Activated naive CD4-positive, alpha-beta T cell treated with anti-CD3 and anti-CD28 coated beads, Interleukin-2, amount 10 ng/mL, durations not matched to agents 7 days and 5 days (primary cell): ENCODE measurements at regions of chr5 and their contacts with region 1.

Region 1: DNA sequence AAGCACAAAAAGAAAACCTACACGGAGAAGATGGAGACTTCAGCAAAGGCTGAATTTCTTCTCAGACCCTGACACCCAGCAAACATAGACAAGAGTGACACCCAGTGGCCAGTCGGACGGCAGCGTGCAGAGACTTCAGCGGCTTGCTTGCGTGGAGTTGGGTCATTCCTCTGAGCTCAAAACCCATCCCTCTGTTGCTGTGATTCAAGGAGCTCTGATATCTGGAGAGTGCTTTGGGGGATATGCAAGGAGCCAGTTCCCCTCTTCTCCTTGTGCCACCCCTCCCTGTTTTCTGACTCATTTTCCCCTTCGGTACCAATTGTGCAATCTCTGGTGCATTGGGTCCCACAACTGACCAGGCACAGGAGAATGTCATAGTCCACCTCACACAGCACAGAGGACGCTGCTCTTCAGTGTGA is 27.5 kb downstream of the SH3TC2 start:
- DNase-seq: peak; percentile 77
- H3K4me3 Mint-ChIP-seq: no peak overlapping the region
- H3K27ac Mint-ChIP-seq: no peak overlapping the region
- H3K4me1 Mint-ChIP-seq: peaks cover 34% of the 10 kb centered on the region
- H3K27me3 Mint-ChIP-seq: peaks cover 11% of the 10 kb centered on the region

Region 2: DNA sequence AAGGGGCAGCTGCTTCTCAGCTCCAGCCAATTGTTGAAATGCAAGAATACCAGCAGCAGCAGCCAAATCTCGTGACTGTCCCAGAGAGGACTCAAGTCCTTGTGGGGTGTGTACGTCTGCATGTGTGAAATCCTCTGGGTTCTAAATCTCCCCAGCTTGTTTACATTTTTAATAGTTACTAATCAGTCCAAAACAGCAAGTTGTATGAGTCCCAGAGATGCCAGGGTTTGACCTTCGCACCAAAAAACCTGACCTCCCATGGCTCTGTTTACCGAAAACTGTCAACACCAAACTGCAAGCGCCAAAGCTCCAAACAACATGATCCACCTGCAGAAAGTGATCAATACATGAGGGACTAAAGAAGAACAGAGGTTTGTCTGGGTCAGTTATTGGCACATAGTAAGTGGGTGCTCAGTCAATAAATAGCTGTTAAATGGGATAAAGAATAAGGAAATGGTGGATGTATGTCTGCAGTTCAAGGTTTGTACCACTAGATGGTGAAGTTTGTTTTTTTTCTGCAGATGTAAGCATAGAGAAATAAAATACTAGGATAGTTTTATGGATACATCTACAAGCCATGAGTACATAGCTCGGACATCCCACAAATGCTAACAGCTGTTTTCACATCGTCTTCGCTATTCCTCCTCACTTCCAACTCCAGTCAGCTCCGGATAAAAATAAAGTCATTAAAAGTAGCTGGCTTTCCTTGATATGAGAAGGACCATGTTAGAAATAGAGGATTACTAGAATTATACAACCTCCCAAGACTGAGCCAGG is 294.2 kb before region 1 on chr5:
- CTCF ChIA-PET with region 1: interaction called, 179 read pairs
- DNase-seq: no peak
- H3K4me3 Mint-ChIP-seq: no peak overlapping the region
- H3K27ac Mint-ChIP-seq: no peak overlapping the region
- H3K4me1 Mint-ChIP-seq: peaks cover 2% of the 10 kb centered on the region
- H3K27me3 Mint-ChIP-seq: peaks cover 15% of the 10 kb centered on the region

Region 3: DNA sequence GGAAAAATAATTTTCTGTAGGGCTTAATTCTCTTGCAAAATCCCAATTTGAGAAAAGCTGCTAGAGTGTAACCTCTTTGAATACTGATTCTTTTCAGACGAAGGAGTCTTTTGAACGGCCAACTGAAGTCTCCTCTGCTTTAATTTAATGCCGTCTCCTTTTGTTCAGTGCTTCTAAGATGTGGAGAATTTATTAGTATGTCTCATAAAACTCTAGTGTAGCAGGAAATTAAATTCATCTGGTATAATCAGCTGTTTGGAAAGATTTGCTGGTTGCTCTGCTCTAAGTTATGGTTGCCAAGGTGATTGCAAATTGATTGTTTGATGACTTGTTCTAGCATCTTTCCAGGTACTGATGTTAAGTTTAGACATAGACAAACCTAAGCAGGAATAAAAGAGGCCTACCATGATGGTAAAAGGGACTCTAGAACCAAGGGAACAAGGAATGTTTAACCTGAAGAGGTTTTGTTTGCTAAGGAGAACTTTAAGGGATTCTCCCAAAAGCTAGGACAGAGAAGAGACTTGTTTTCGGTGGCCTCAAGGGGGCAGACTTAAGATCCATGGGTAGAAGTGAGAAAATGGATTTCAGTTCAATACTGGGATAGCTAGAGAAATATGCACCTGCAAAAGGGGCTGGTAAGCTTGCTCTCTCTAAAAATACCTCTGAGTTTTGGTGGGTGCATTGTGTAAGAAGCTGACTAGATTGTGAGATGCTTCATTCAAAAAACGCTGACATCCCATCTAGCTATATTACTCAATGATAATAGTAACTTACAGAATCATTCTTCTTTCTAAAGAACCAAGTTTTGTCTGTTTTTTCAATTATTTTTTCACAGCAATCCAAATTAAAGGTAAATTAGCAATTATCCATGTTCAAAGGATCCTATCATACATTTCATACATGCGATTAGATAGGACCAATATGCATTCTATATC is 214.7 kb before region 1 on chr5:
- CTCF ChIA-PET with region 1: interaction called, 20 read pairs
- DNase-seq: peak; percentile 42
- H3K4me3 Mint-ChIP-seq: no peak overlapping the region
- H3K27ac Mint-ChIP-seq: no peak overlapping the region
- H3K4me1 Mint-ChIP-seq: peaks cover 10% of the 10 kb centered on the region
- H3K27me3 Mint-ChIP-seq: peaks cover 39% of the 10 kb centered on the region

Region 4: DNA sequence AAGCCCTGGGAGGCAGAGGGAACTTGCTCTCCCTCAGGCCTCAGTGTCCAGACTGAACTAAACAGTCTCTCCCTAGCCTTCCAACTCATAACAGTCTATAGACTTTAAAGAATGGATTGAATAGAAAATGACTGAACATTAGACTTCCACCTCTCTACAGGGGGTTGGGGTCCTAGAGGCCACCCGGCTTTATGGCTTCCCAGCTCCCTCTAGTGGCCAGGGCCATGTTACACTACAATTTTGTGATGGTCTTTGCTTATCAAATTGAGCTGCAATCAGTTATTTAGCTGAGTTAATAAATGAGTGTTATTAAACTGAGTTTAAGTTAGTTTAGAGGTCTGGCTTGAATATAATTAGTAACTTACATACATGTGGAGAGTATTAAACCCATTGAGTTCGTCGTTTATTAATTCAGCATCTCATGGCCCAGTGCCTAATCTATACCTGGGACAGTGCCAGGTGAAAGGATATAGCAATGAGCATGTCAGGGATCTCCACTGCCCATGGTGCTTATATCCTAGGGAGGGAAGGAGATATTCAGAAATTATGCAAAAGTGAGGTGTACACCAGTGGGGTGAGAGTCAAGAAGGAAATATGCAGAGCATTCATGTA is 77.7 kb before region 1 on chr5:
- CTCF ChIA-PET with region 1: interaction called, 33 read pairs
- DNase-seq: peak; percentile 57
- H3K4me3 Mint-ChIP-seq: no peak overlapping the region
- H3K27ac Mint-ChIP-seq: no peak overlapping the region
- H3K4me1 Mint-ChIP-seq: no peaks in the 10 kb centered on the region
- H3K27me3 Mint-ChIP-seq: peaks cover 8% of the 10 kb centered on the region

Region 5: GRCh38 chr5:149015561-149015960 is 19.8 kb before region 1 on chr5:
- CTCF ChIA-PET with region 1: interaction called, 11 read pairs
- DNase-seq: no peak
- H3K4me3 Mint-ChIP-seq: no peak overlapping the region
- H3K27ac Mint-ChIP-seq: no peak overlapping the region
- H3K4me1 Mint-ChIP-seq: no peaks in the 10 kb centered on the region
- H3K27me3 Mint-ChIP-seq: no peaks in the 10 kb centered on the region

Region 6: GRCh38 chr5:149114403-149115312 is 79.3 kb after region 1 on chr5:
- CTCF ChIA-PET with region 1: interaction called, 21 read pairs
- DNase-seq: peak; percentile 57
- H3K4me3 Mint-ChIP-seq: no peak overlapping the region
- H3K27ac Mint-ChIP-seq: no peak overlapping the region
- H3K4me1 Mint-ChIP-seq: no peaks in the 10 kb centered on the region
- H3K27me3 Mint-ChIP-seq: peaks cover 19% of the 10 kb centered on the region